K562 (cell line): ENCODE measurements at regions of chr6 and their contacts with region 1.

Region 1: DNA sequence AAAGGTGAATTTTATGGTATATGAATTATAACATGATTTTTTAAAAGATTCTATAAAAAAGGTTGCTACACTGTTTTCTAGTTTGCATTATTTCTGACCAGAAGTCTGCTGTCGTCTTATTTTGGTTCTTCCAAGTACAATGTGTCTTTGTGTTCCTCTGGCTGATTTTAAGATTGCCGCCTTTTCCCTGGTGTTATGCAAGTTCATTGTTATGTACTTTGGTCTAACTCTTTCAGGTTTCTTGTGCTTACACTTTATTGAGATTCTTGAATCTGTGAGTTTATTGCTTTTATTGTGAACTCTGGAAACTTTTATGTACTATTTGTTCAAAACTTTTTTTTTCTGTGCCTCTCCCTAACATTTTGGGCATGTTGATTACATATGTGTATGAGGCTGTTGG is 109.8 kb downstream of the RFX6 start:
- DNase-seq: no peak
- ATAC-seq: no peak
- H3K4me3 ChIP-seq: no peak overlapping the region
- H3K27ac ChIP-seq: no peak overlapping the region
- H3K4me1 ChIP-seq: no peaks in the 10 kb centered on the region
- H3K27me3 ChIP-seq: no peaks in the 10 kb centered on the region
- CTCF ChIP-seq: no peak
- EP300 ChIP-seq: no peak
- POLR2A ChIP-seq: no peak
- RAD21 ChIP-seq: no peak

Region 2: GRCh38 chr6:116902629-116903028 is 84.2 kb before region 1 on chr6:
- CTCF ChIA-PET with region 1: no interaction called
- POLR2A ChIA-PET with region 1: no interaction called
- in situ Hi-C with region 1: no loop called
- intact Hi-C with region 1: no loop called
- DNase-seq: no peak
- ATAC-seq: no peak
- H3K4me3 ChIP-seq: no peak overlapping the region
- H3K27ac ChIP-seq: no peak overlapping the region
- H3K4me1 ChIP-seq: no peaks in the 10 kb centered on the region
- H3K27me3 ChIP-seq: no peaks in the 10 kb centered on the region
- CTCF ChIP-seq: no peak
- EP300 ChIP-seq: no peak
- POLR2A ChIP-seq: no peak
- RAD21 ChIP-seq: no peak

Region 3: GRCh38 chr6:117188627-117189201 is 201.9 kb after region 1 on chr6:
- CTCF ChIA-PET with region 1: no interaction called
- POLR2A ChIA-PET with region 1: no interaction called
- in situ Hi-C with region 1: no loop called
- intact Hi-C with region 1: loop called (anchors 10 kb)
- DNase-seq: peak in 1 of 4 experiments; percentile 2
- ATAC-seq: no peak
- H3K4me3 ChIP-seq: no peak overlapping the region
- H3K27ac ChIP-seq: no peak overlapping the region
- H3K4me1 ChIP-seq: no peaks in the 10 kb centered on the region
- H3K27me3 ChIP-seq: no peaks in the 10 kb centered on the region
- CTCF ChIP-seq: peak in 1 of 3 experiments; percentile 15; a peak in 1 of 6 replicates
- EP300 ChIP-seq: no peak
- POLR2A ChIP-seq: no peak
- RAD21 ChIP-seq: 0 out of 4 replicates have a peak, but pooled peaks of 1 of the 2 experiments have one; percentile 10